ENCODE measurements at regions of chr14 and their contacts with region 1.

Region 1: GRCh38 chr14:97212399-97212798 is 415.2 kb downstream of the VRK1 start:
- DNase-seq: no peak
- H3K4me3 ChIP-seq: no peak overlapping the region
- H3K27ac ChIP-seq: peak overlapping the region; percentile 99
- H3K4me1 ChIP-seq: peaks cover 88% of the 10 kb centered on the region
- H3K27me3 ChIP-seq: no peaks in the 10 kb centered on the region
- CTCF ChIP-seq: no peak

Region 2: DNA sequence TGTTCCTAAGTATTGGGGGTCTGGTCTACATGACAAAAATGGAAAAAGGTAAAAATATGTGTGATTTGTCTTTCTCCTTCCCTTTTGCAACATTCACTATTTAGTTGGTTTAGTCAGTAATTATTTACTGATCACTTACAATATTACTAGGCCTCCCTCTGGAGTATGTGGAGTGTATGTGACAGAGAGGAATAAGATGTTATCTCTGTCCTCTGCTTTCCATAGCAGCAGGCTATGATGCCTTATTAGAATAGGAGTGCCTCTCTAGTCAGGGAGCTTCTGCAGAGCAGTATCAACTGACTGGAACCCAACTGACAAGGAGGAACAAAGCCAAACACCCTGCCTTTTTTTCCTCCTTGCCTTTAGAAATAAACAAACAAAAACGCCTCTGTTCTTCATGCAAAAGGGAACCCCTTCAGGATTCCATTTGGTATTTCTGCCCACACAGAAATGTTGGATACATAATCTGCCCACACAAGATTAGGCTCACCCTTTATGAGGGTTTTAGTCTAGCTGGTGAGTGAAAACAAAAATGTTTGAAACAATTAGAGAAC is 365.0 kb before region 1 on chr14:
- CTCF ChIA-PET with region 1: no interaction called
- POLR2A ChIA-PET with region 1: interaction called, 17 read pairs
- intact Hi-C with region 1: no loop called
- DNase-seq: no peak
- H3K4me3 ChIP-seq: no peak overlapping the region
- H3K27ac ChIP-seq: no peak overlapping the region
- H3K4me1 ChIP-seq: peaks cover 8% of the 10 kb centered on the region
- H3K27me3 ChIP-seq: no peaks in the 10 kb centered on the region
- CTCF ChIP-seq: no peak

Region 3: DNA sequence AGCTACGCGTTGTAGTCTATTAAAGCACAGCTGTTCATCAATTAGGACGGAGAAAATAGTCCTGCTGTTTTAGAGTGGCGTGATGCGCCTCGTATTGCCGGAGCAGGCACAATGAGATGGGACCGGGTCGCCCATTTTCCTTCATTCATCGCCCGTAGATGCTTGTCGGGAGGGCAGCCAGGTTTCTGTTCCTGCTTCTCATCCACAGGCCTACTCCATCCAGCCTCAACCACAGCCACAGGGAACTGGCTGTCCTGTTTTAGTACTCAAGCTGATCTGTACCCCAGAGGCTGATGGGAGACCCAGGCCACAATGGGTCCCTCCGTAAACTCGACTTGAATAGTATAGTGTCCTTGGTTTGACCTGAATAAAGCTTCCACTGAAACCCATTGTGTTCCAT is 151.2 kb before region 1 on chr14:
- CTCF ChIA-PET with region 1: interaction called, 19 read pairs
- POLR2A ChIA-PET with region 1: interaction called, 30 read pairs
- intact Hi-C with region 1: loop called (anchors 1 kb)
- DNase-seq: no peak
- H3K4me3 ChIP-seq: no peak overlapping the region
- H3K27ac ChIP-seq: peak overlapping the region; percentile 22
- H3K4me1 ChIP-seq: peaks cover 42% of the 10 kb centered on the region
- H3K27me3 ChIP-seq: no peaks in the 10 kb centered on the region
- CTCF ChIP-seq: no peak

Region 4: DNA sequence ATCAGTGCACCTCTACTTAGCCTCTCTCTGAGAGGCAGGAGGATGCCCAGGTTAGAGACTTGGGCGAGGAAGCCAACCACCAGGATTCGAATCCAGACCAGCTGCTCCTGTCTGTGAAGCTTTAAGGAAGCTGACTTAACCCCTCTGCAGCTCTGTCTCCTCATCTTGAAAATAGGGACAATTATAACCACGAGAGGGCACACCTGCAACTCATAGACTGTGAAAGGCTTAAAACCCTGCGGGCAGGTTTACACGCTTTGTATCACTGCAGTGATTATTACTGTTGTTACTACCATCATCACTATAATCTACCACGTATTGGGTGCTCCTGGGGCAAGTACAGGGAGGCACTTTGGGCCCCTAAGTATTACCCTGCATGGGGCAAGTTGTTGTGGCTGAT is 35.4 kb before region 1 on chr14:
- CTCF ChIA-PET with region 1: no interaction called
- POLR2A ChIA-PET with region 1: no interaction called
- intact Hi-C with region 1: loop called (anchors 5 kb)
- DNase-seq: no peak
- H3K4me3 ChIP-seq: no peak overlapping the region
- H3K27ac ChIP-seq: peak overlapping the region; percentile 83
- H3K4me1 ChIP-seq: peaks cover 64% of the 10 kb centered on the region
- H3K27me3 ChIP-seq: no peaks in the 10 kb centered on the region
- CTCF ChIP-seq: peak; percentile 29; the same call in 1 of the 2 replicates

Region 5: GRCh38 chr14:97233319-97233985 is 21.1 kb after region 1 on chr14:
- CTCF ChIA-PET with region 1: interaction called, 8 read pairs
- POLR2A ChIA-PET with region 1: interaction called, 3 read pairs
- intact Hi-C with region 1: loop called (anchors 1 kb)
- DNase-seq: peak; percentile 63
- H3K4me3 ChIP-seq: no peak overlapping the region
- H3K27ac ChIP-seq: peak overlapping the region; percentile 93
- H3K4me1 ChIP-seq: peaks cover 58% of the 10 kb centered on the region
- H3K27me3 ChIP-seq: no peaks in the 10 kb centered on the region
- CTCF ChIP-seq: no peak

Region 6: GRCh38 chr14:97441740-97442362 is 229.5 kb after region 1 on chr14:
- CTCF ChIA-PET with region 1: no interaction called
- POLR2A ChIA-PET with region 1: no interaction called
- intact Hi-C with region 1: no loop called
- DNase-seq: peak; percentile 19
- H3K4me3 ChIP-seq: no peak overlapping the region
- H3K27ac ChIP-seq: no peak overlapping the region
- H3K4me1 ChIP-seq: peaks cover 7% of the 10 kb centered on the region
- H3K27me3 ChIP-seq: no peaks in the 10 kb centered on the region
- CTCF ChIP-seq: no peak

Region 7: GRCh38 chr14:97924922-97925613 is 712.7 kb after region 1 on chr14:
- CTCF ChIA-PET with region 1: no interaction called
- POLR2A ChIA-PET with region 1: no interaction called
- intact Hi-C with region 1: no loop called
- DNase-seq: no peak
- H3K4me3 ChIP-seq: no peak overlapping the region
- H3K27ac ChIP-seq: no peak overlapping the region
- H3K4me1 ChIP-seq: peaks cover 8% of the 10 kb centered on the region
- H3K27me3 ChIP-seq: no peaks in the 10 kb centered on the region
- CTCF ChIP-seq: no peak

Measured in A673 (cell line).